IMR-90 (cell line): ENCODE measurements at regions of chr4 and their contacts with region 1.

Region 1: GRCh38 chr4:89434364-89434988 is 126.9 kb upstream of the GPRIN3 start:
- DNase-seq: peak; percentile 35
- ATAC-seq: peak; percentile 84
- H3K4me3 ChIP-seq: no peak overlapping the region
- H3K27ac ChIP-seq: no peak overlapping the region
- H3K4me1 ChIP-seq: no peaks in the 10 kb centered on the region
- H3K27me3 ChIP-seq: 0 out of 2 replicates have a peak, but pooled peaks cover 1% of the 10 kb centered on the region
- CTCF ChIP-seq: peak; percentile 69
- POLR2A ChIP-seq: no peak
- RAD21 ChIP-seq: peak; percentile 76

Region 2: GRCh38 chr4:89158884-89159503 is 275.5 kb before region 1 on chr4:
- CTCF ChIA-PET with region 1: interaction called, 3 read pairs
- POLR2A ChIA-PET with region 1: no interaction called
- dilution Hi-C with region 1: no loop called
- in situ Hi-C with region 1: no loop called
- intact Hi-C with region 1: loop called (anchors 2 kb)
- DNase-seq: peak; percentile 43
- ATAC-seq: peak; percentile 88
- H3K4me3 ChIP-seq: no peak overlapping the region
- H3K27ac ChIP-seq: no peak overlapping the region
- H3K4me1 ChIP-seq: no peaks in the 10 kb centered on the region
- H3K27me3 ChIP-seq: peaks cover 7% of the 10 kb centered on the region
- CTCF ChIP-seq: peak; percentile 68
- POLR2A ChIP-seq: no peak
- RAD21 ChIP-seq: peak; percentile 58

Region 3: GRCh38 chr4:89254847-89255246 is 179.6 kb before region 1 on chr4:
- CTCF ChIA-PET with region 1: no interaction called
- POLR2A ChIA-PET with region 1: no interaction called
- dilution Hi-C with region 1: no loop called
- in situ Hi-C with region 1: no loop called
- intact Hi-C with region 1: loop called (anchors 1 kb)
- DNase-seq: peak; percentile 7
- ATAC-seq: peak; percentile 65
- H3K4me3 ChIP-seq: no peak overlapping the region
- H3K27ac ChIP-seq: no peak overlapping the region
- H3K4me1 ChIP-seq: no peaks in the 10 kb centered on the region
- H3K27me3 ChIP-seq: peaks cover 2% of the 10 kb centered on the region
- CTCF ChIP-seq: peak; percentile 59
- POLR2A ChIP-seq: no peak
- RAD21 ChIP-seq: peak; percentile 38